Activated B cell treated with CpG ODN at 0.5 μM for 24 hours (primary cell): ENCODE measurements at regions of chr4 and their contacts with region 1.

Region 1: DNA sequence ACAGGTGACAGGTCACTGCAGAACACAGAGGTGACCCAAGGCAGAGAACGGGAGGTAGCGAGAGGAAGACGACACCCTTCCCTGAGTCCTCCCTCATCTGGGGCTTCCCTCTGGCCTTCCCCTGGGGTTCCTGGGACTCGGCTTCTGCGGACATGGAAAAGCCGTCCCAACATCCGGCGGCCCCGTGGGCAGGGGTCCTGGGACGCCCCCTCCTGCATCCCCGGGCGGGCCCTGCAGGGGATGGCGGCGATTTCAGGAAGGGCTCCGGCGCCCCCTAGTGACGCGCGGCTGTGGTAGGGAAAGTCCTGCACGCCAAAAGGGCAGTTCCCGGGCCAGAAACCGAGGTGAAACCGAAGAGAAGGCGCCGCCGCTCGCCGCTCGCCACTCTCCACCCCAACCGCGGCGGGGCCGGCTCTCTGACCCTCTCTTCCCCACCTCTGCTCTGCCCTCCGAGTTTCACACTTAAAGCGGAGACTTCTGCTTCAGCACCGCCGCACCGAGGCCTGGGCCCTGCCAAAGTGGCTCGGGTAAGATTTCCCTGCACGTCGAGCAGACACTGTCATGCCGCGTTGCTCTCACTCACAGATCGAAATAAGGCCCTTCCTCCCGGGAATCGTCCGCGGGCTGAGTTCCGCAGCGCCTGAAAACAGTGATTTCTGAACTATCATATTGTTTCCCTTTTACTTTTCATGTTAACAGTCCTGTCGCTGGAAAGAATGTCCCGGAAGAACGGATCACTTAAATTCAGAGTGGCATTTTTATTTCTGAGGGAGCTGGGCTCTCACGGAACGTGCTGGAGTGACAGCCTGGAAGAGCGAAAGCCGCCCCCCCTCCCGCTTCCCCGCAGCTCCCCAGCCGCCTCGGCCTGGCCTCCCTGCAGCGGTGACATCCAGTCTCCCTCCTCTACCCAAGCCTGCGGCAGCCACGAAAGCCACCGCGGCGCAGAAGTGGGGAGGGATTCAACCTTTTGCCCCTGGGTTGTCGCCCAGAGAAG is 110.6 kb downstream of the DCTD start:
- DNase-seq: peak; percentile 29
- ATAC-seq: peak; percentile 31
- H3K4me3 Mint-ChIP-seq: peak overlapping the region; percentile 81
- H3K27ac Mint-ChIP-seq: no peak overlapping the region
- H3K4me1 Mint-ChIP-seq: peaks cover 19% of the 10 kb centered on the region
- H3K27me3 Mint-ChIP-seq: peaks cover 15% of the 10 kb centered on the region
- CTCF ChIP-seq: no peak

Region 2: GRCh38 chr4:182478475-182478874 is 328.1 kb before region 1 on chr4:
- CTCF ChIA-PET with region 1: no interaction called
- POLR2A ChIA-PET with region 1: no interaction called
- intact Hi-C with region 1: loop called (anchors 1 kb)
- DNase-seq: no peak
- ATAC-seq: peak; percentile 50
- H3K4me3 Mint-ChIP-seq: no peak overlapping the region
- H3K27ac Mint-ChIP-seq: no peak overlapping the region
- H3K4me1 Mint-ChIP-seq: no peaks in the 10 kb centered on the region
- H3K27me3 Mint-ChIP-seq: peaks cover 4% of the 10 kb centered on the region
- CTCF ChIP-seq: peak; percentile 12